Breast epithelium (tissue), 4 donors: ENCODE measurements at regions of chr10 and their contacts with region 1.

Region 1: DNA sequence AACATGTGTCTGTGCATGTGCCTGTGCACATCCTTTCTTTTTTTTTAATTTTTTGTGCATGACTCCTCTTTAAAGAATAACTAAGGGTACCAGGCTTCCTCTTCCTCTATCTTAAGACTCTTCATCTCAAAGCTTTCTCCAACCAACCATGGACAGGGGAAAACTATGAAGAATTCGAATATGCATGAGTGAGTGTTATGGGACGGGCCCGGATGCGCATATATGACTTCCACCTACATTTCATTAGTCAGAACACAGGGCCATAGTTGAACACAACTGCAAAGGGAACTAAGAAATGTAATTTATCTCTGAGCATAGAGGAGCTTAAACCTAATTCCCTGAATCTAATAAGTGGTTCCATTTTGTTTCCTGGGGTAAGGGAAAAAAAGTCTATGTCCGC is 270.3 kb upstream of the SORCS1 start:
- DNase-seq: no peak
- H3K4me3 ChIP-seq: no peak overlapping the region
- H3K27ac ChIP-seq: no peak overlapping the region
- H3K4me1 ChIP-seq: no peaks in the 10 kb centered on the region
- H3K27me3 ChIP-seq: no peaks in the 10 kb centered on the region
- CTCF ChIP-seq: no peak
- POLR2A ChIP-seq: no peak

Region 2: DNA sequence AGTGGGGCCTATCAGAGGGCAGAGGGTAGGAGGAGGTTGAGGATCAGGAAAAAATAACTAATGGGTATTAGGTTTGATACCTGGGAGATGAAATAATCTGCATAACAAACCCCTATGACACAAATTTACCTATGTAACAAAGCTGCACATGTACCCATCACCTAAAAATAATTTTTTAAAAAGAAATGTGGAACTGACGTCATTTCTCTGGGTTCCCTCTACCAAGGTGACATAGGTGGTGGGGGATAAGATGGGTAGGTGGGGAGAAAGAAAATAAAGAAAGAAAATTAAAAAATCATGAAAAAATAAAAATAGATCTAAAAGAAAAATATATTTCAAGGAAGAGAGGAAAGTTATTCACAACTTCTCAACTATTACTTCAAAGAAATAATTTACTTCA is 117.3 kb before region 1 on chr10:
- intact Hi-C with region 1: loop called (anchors 5 kb)
- DNase-seq: no peak
- H3K4me3 ChIP-seq: no peak overlapping the region
- H3K27ac ChIP-seq: no peak overlapping the region
- H3K4me1 ChIP-seq: no peaks in the 10 kb centered on the region
- H3K27me3 ChIP-seq: no peaks in the 10 kb centered on the region
- CTCF ChIP-seq: no peak
- POLR2A ChIP-seq: no peak

Region 3: GRCh38 chr10:107362306-107362705 is 72.5 kb before region 1 on chr10:
- intact Hi-C with region 1: no loop called
- DNase-seq: no peak
- H3K4me3 ChIP-seq: no peak overlapping the region
- H3K27ac ChIP-seq: no peak overlapping the region
- H3K4me1 ChIP-seq: no peaks in the 10 kb centered on the region
- H3K27me3 ChIP-seq: no peaks in the 10 kb centered on the region
- CTCF ChIP-seq: no peak
- POLR2A ChIP-seq: no peak